GM12878 (cell line): ENCODE measurements at regions of chr15 and their contacts with region 1.

Region 1: GRCh38 chr15:98442379-98442833 is 205.9 kb upstream of the IGF1R start:
- DNase-seq: no peak
- ATAC-seq: peak; percentile 90
- H3K4me3 ChIP-seq: no peak overlapping the region
- H3K27ac ChIP-seq: no peak overlapping the region
- H3K4me1 ChIP-seq: peaks cover 3% of the 10 kb centered on the region; the same call in 1 of the 2 replicates
- H3K27me3 ChIP-seq: no peaks in the 10 kb centered on the region; a peak in 1 of 4 replicates
- CTCF ChIP-seq: peak; percentile 80 to 83 (median 82)
- EP300 ChIP-seq: no peak
- POLR2A ChIP-seq: no peak
- RAD21 ChIP-seq: peak; percentile 58

Region 2: DNA sequence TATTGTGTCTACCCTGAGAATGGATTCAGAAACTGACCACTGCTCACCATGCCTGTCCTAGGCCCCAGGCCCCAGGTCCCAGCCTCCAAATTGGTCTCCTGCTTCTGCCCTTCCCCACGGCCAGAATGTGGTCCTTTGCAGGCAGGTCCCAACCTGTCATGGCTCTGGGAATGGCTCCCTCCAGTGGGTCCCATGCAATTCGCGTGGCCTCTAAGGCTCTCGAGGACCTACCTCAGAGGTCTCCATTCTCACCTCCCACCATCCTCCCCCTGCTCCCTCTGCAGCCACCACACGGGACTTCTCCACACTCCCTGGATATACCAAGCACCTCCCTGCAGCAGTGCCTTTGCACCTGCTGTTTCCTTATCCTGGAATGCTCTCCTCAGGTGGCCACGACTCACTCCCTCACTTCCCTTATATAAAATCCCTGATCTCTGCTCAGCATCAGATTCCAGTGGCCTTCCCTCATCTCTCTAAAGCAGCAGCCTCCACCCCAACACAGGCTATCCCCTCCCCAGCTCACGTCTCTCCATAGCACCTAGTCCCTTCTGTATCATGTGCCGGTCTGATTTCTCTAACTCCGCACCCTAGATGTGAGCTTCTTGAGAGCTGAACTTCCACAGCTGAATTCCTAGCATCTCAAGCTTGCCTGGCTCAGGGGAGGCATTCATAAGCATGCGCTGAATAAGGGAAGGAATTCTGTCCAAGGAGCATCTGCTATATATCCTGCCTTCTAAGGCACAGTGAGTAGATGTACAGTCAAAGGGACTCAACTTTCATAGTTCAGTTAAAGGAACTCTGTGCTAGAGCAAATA is 425.0 kb before region 1 on chr15:
- CTCF ChIA-PET with region 1: no interaction called
- POLR2A ChIA-PET with region 1: no interaction called
- RAD21 ChIA-PET with region 1: no interaction called
- SMC1A ChIA-PET with region 1: no interaction called
- in situ Hi-C with region 1: no loop called
- intact Hi-C with region 1: no loop called
- DNase-seq: no peak
- ATAC-seq: no peak
- H3K4me3 ChIP-seq: no peak overlapping the region
- H3K27ac ChIP-seq: no peak overlapping the region
- H3K4me1 ChIP-seq: no peaks in the 10 kb centered on the region
- H3K27me3 ChIP-seq: no peaks in the 10 kb centered on the region
- CTCF ChIP-seq: no peak
- EP300 ChIP-seq: no peak
- POLR2A ChIP-seq: no peak
- RAD21 ChIP-seq: no peak

Region 3: GRCh38 chr15:98647774-98648653 is 205.6 kb after region 1 on chr15 and contains the start of gene IGF1R:
- CTCF ChIA-PET with region 1: no interaction called
- POLR2A ChIA-PET with region 1: no interaction called
- RAD21 ChIA-PET with region 1: no interaction called
- SMC1A ChIA-PET with region 1: interaction called, 3 read pairs
- in situ Hi-C with region 1: loop called (anchors 10 kb)
- intact Hi-C with region 1: loop called (anchors 2 kb)
- DNase-seq: no peak
- ATAC-seq: peak; percentile 73
- H3K4me3 ChIP-seq: peak within 1 kb of the TSS; percentile 85
- H3K27ac ChIP-seq: no peak within 1 kb of the TSS
- H3K4me1 ChIP-seq: no peaks in the 10 kb centered on the region; the same call in 1 of the 2 replicates
- H3K27me3 ChIP-seq: peaks cover 14 to 29% of the 10 kb centered on the region in 2 experiments
- CTCF ChIP-seq: no peak
- EP300 ChIP-seq: no peak
- POLR2A ChIP-seq: peak; percentile 23; the same call in 1 of the 2 replicates
- RAD21 ChIP-seq: no peak
- polyA plus RNA-seq, gene IGF1R: 0.03 to 0.11 TPM

Region 4: DNA sequence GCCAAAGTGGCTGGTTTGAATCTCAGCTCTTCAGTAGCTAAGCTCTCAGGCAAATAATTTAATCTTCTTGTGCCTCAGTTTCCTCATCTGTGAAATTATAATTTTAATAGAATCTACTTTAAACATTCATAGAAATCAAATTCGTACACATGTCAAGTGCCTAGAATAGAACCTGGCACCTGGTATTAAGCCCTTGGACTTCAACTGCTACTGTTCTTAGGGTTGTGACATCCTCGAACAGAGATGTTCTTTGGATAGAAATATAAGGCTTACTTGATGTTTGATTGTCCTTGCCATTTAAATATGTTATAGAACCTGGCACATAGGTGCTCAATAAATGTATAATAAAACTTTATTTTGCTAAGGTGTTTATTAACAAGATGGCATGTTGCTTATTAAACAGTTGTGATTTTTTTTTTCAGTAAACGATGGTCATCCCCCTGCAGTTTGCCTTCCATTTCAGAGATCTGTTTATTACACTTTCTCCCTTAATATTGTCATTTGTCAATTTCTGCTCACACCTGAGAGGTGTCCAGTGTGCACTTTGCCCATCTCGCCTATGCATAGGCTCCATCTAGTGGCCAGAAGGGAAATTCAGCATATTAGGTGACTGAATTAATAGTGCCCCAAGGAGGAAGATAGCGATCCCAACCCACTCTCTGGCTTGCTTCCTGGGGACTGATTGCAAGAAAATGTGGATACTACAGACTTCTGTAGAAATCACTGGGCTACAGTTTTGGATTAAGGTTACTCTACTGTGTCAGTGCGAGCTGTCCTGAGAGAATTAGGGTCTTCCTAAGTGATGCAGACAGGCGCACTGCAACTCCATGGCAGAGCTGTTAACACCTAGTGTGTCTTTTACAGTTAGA is 216.7 kb after region 1 on chr15:
- CTCF ChIA-PET with region 1: interaction called, 16 read pairs
- POLR2A ChIA-PET with region 1: no interaction called
- RAD21 ChIA-PET with region 1: no interaction called
- SMC1A ChIA-PET with region 1: interaction called, 5 read pairs
- in situ Hi-C with region 1: loop called (anchors 10 kb)
- intact Hi-C with region 1: loop called (anchors 1 kb)
- DNase-seq: peak; percentile 11
- ATAC-seq: peak; percentile 96
- H3K4me3 ChIP-seq: no peak overlapping the region
- H3K27ac ChIP-seq: no peak overlapping the region
- H3K4me1 ChIP-seq: no peaks in the 10 kb centered on the region
- H3K27me3 ChIP-seq: no peaks in the 10 kb centered on the region
- CTCF ChIP-seq: peak; percentile 85 to 91 (median 87); a peak in 5 of 6 replicates
- EP300 ChIP-seq: no peak
- POLR2A ChIP-seq: no peak
- RAD21 ChIP-seq: peak; percentile 76

Region 5: GRCh38 chr15:99213187-99213811 is 770.9 kb after region 1 on chr15:
- CTCF ChIA-PET with region 1: no interaction called
- POLR2A ChIA-PET with region 1: no interaction called
- RAD21 ChIA-PET with region 1: no interaction called
- SMC1A ChIA-PET with region 1: no interaction called
- in situ Hi-C with region 1: no loop called
- intact Hi-C with region 1: loop called (anchors 10 kb)
- DNase-seq: peak; percentile 4
- ATAC-seq: peak; percentile 93
- H3K4me3 ChIP-seq: no peak overlapping the region
- H3K27ac ChIP-seq: no peak overlapping the region
- H3K4me1 ChIP-seq: no peaks in the 10 kb centered on the region
- H3K27me3 ChIP-seq: no peaks in the 10 kb centered on the region
- CTCF ChIP-seq: peak; percentile 83 to 92 (median 85)
- EP300 ChIP-seq: no peak
- POLR2A ChIP-seq: no peak
- RAD21 ChIP-seq: peak; percentile 94